Activated CD4-positive, alpha-beta memory T cell treated with anti-CD3 and anti-CD28 coated beads for 36 hours (primary cell): ENCODE measurements at regions of chr18 and their contacts with region 1.

Region 1: GRCh38 chr18:43396266-43396665 is 119.0 kb upstream of the SYT4 start:
- DNase-seq: no peak
- H3K4me3 Mint-ChIP-seq: no peak overlapping the region
- H3K27ac Mint-ChIP-seq: no peak overlapping the region
- H3K4me1 Mint-ChIP-seq: no peaks in the 10 kb centered on the region
- H3K27me3 Mint-ChIP-seq: no peaks in the 10 kb centered on the region

Region 2: GRCh38 chr18:43236921-43237560 is 159.2 kb before region 1 on chr18:
- CTCF ChIA-PET with region 1: no interaction called
- POLR2A ChIA-PET with region 1: no interaction called
- intact Hi-C with region 1: no loop called
- DNase-seq: no peak
- H3K4me3 Mint-ChIP-seq: no peak overlapping the region
- H3K27ac Mint-ChIP-seq: no peak overlapping the region
- H3K4me1 Mint-ChIP-seq: no peaks in the 10 kb centered on the region
- H3K27me3 Mint-ChIP-seq: no peaks in the 10 kb centered on the region

Region 3: GRCh38 chr18:43435851-43436250 is 39.6 kb after region 1 on chr18:
- CTCF ChIA-PET with region 1: no interaction called
- POLR2A ChIA-PET with region 1: no interaction called
- intact Hi-C with region 1: loop called (anchors 2 kb)
- DNase-seq: no peak
- H3K4me3 Mint-ChIP-seq: no peak overlapping the region
- H3K27ac Mint-ChIP-seq: no peak overlapping the region
- H3K4me1 Mint-ChIP-seq: no peaks in the 10 kb centered on the region
- H3K27me3 Mint-ChIP-seq: no peaks in the 10 kb centered on the region

Region 4: DNA sequence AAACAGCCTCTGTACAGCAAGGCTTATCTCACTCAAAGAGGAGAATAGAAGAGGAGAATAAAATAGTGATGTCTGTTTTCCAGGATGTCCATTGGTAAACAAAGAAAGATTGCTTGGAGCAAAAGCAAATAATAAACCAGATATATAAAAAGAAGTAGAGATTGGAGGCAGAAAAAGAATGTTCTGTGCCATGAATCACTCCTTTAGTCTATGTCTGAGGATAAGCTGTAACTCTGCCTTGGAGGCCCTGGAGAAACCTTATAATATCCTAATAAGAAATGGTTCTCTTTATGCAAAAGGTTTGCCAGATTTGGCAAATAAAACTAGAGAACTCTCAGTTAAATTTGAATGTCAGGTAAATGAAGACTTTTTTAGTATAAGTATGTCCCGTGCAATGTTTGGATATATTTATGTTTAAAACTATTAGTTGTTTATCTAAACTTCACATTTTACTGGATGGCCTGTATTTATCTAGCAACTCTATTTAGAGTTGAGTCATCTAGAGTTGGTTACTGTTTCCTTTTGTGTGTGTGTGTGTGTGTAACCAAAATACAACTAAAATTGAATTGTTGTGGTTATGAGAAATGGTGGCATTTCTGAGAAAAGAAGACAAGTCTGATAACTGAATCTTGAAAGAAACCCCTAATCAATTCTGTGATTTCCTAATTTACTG is 774.1 kb after region 1 on chr18:
- CTCF ChIA-PET with region 1: no interaction called
- POLR2A ChIA-PET with region 1: no interaction called
- intact Hi-C with region 1: no loop called
- DNase-seq: no peak
- H3K4me3 Mint-ChIP-seq: no peak overlapping the region
- H3K27ac Mint-ChIP-seq: no peak overlapping the region
- H3K4me1 Mint-ChIP-seq: no peaks in the 10 kb centered on the region
- H3K27me3 Mint-ChIP-seq: no peaks in the 10 kb centered on the region